A549 (cell line): ENCODE measurements at regions of chr17 and their contacts with region 1.

Region 1: GRCh38 chr17:40531051-40531991 is 29.9 kb upstream of the TNS4 start:
- DNase-seq: no peak
- ATAC-seq: no peak
- H3K4me3 ChIP-seq: no peak overlapping the region
- H3K27ac ChIP-seq: peak overlapping the region; percentile 95 to 99
- H3K4me1 ChIP-seq: peaks cover 57% of the 10 kb centered on the region
- CTCF ChIP-seq: no peak
- EP300 ChIP-seq: no peak
- POLR2A ChIP-seq: no peak
- RAD21 ChIP-seq: no peak

Region 2: GRCh38 chr17:40355123-40355803 is 176.1 kb before region 1 on chr17:
- CTCF ChIA-PET with region 1: interaction called, 125 read pairs
- POLR2A ChIA-PET with region 1: no interaction called
- DNase-seq: peak; percentile 77 to 97
- ATAC-seq: peak; percentile 58 to 84
- H3K4me3 ChIP-seq: no peak overlapping the region
- H3K27ac ChIP-seq: peak overlapping the region in 1 of 2 experiments; percentile 62; a peak in 3 of 6 replicates
- H3K4me1 ChIP-seq: peaks cover 52% of the 10 kb centered on the region
- CTCF ChIP-seq: peak; percentile 98
- EP300 ChIP-seq: no peak
- POLR2A ChIP-seq: no peak
- RAD21 ChIP-seq: peak; percentile 99 to 100

Region 3: DNA sequence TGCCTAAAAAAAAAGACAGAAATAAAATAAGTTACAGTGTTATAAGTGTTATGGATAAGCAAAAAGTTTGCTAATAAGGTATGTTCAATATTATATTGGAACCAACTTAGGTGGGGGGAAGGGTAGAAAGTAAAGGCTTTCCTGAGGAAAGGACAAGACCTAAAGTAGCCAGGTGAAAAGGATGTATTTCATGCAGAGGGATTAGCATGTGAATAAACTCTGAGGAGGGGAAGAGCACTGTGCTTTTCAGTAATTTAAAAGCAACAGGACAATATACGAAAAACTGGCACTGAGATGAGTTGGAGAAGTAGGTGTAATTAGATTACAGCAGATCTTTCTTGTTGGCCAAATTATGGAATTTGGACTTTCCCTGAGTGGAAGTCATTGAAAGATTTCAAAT is 121.2 kb before region 1 on chr17:
- CTCF ChIA-PET with region 1: interaction called, 19 read pairs
- POLR2A ChIA-PET with region 1: interaction called, 3 read pairs
- DNase-seq: no peak
- ATAC-seq: no peak
- H3K4me3 ChIP-seq: no peak overlapping the region
- H3K27ac ChIP-seq: 0 out of 6 replicates have a peak overlapping the region, but pooled peaks of 1 of the 2 experiments have one; percentile 15
- H3K4me1 ChIP-seq: peaks cover 14% of the 10 kb centered on the region
- CTCF ChIP-seq: no peak
- EP300 ChIP-seq: no peak
- POLR2A ChIP-seq: no peak
- RAD21 ChIP-seq: no peak

Region 4: DNA sequence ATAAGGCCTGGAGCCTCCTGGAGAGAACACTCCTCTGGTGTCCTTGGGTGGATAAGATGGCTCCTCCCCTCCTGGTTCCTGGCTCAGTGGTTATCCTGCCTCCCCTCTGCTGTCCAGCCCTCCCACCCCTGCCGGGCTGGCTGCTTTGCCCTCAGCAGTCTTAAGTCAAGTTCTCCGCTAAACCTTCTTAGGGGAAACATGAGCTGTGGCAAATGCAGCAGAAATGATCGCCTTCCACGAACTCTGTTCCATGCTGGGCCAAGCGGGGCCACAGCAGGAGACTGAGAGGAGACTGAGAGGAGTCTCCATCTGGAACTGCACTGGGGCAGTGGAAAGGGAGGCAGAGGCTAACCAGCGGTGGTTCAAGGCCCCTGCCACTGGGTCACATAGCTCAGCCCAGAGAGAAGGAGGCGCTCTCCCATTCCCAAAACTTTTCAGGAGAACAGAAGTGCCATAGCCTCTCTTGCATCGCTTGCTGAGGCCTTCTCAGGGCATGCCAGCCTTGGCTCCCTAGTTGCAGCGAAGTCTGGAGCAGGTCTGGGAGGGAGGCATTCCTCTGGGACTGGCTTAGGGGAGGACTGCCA is 56.8 kb before region 1 on chr17:
- CTCF ChIA-PET with region 1: interaction called, 822 read pairs
- POLR2A ChIA-PET with region 1: interaction called, 177 read pairs
- DNase-seq: no peak
- ATAC-seq: peak; percentile 2 to 4; a peak in 4 of 6 replicates
- H3K4me3 ChIP-seq: no peak overlapping the region
- H3K27ac ChIP-seq: peak overlapping the region; percentile 96 to 97
- H3K4me1 ChIP-seq: peaks cover 83% of the 10 kb centered on the region
- CTCF ChIP-seq: no peak
- EP300 ChIP-seq: no peak
- POLR2A ChIP-seq: 0 out of 2 replicates have a peak, but pooled peaks have one; percentile 5
- RAD21 ChIP-seq: no peak

Region 5: DNA sequence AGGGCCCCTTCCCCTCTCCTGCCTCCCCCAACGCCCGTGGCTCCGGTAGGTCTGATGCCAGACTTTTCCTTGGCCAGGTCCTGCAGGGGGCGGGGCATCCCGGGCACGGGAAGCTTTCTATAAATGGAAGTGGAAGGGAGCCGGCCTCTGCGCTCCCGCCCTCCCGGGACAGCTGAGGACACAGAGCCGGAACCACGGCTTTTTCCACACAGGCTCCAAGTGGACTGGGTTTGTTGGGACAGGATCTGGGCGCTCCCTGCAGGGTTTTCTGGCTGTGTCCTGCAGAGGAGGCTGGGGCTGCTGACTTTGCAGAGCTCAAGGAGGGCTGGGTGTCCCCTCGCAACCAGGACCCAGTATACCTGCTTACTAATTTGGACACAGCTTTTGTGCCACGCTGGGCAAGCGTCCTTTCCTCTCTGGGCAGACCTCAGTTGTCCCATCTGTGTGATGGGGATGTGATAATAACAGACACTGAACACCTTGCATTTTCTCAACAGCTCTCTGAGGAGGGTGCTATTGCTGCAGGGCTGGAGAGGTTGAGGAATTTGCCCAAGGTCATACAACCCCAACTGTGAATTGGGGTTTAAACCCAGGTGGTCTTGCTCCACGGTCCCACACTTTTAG is 31.7 kb before region 1 on chr17:
- CTCF ChIA-PET with region 1: interaction called, 91 read pairs
- POLR2A ChIA-PET with region 1: interaction called, 9 read pairs
- DNase-seq: peak; percentile 85 to 88
- ATAC-seq: peak; percentile 77 to 80
- H3K4me3 ChIP-seq: peak overlapping the region; percentile 60
- H3K27ac ChIP-seq: peak overlapping the region; percentile 96 to 97
- H3K4me1 ChIP-seq: peaks cover 71% of the 10 kb centered on the region
- CTCF ChIP-seq: no peak
- EP300 ChIP-seq: no peak
- POLR2A ChIP-seq: peak; percentile 74
- RAD21 ChIP-seq: peak; percentile 16 to 28; a peak in 2 of 5 replicates

Region 6: DNA sequence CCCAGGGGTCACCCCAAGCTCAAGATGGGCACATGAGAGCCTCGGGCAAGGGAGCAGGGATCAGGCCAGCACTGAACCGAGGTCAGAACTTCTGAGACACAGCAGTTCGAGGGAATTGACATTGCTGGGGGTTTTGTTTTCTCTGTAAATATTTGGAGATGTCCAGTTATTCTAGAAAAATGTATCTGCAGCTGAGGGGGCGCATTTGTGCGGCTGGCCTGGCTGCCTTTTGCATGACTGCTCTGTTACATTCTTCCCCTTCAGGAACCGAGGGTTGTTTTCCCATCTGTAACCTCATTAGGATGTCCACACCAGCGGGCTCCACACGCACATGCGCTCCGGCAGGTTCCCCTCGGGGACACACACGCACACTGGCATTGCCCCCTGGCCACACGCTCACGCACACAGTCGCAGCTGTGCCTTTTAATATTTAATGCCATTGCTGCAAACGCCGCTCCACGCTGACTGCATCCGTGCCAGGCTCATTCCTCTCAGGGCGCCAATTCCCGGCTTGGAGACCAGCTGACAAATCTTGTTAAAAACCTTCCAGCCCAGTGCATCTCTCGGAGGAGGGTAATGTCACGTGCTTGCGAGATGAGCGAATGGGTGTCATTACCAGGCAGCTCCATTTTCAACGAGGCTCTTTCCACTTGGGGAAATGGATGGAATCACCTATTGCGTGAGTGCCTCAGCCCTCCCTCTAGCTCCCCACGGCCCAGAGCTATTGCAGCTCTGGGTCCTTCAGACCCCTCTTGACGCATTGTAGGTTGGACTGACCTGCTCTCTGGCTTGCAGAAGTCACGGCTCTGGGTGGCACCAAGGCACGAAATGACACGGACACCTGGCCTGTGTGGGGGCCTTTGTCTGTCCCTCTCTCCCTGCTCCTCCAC is 20.8 kb after region 1 on chr17:
- CTCF ChIA-PET with region 1: interaction called, 1,144 read pairs
- POLR2A ChIA-PET with region 1: interaction called, 64 read pairs
- DNase-seq: peak; percentile 95 to 99
- ATAC-seq: peak; percentile 51 to 75
- H3K4me3 ChIP-seq: peak overlapping the region; percentile 17; the same call in 2 of the 3 replicates
- H3K27ac ChIP-seq: peak overlapping the region; percentile 95 to 99
- H3K4me1 ChIP-seq: peaks cover 84% of the 10 kb centered on the region
- CTCF ChIP-seq: no peak
- EP300 ChIP-seq: peak; percentile 100
- POLR2A ChIP-seq: no peak
- RAD21 ChIP-seq: peak; percentile 43 to 62